Esophagus muscularis mucosa (tissue), 4 donors: ENCODE measurements at regions of chr3 and their contacts with region 1.

Region 1: DNA sequence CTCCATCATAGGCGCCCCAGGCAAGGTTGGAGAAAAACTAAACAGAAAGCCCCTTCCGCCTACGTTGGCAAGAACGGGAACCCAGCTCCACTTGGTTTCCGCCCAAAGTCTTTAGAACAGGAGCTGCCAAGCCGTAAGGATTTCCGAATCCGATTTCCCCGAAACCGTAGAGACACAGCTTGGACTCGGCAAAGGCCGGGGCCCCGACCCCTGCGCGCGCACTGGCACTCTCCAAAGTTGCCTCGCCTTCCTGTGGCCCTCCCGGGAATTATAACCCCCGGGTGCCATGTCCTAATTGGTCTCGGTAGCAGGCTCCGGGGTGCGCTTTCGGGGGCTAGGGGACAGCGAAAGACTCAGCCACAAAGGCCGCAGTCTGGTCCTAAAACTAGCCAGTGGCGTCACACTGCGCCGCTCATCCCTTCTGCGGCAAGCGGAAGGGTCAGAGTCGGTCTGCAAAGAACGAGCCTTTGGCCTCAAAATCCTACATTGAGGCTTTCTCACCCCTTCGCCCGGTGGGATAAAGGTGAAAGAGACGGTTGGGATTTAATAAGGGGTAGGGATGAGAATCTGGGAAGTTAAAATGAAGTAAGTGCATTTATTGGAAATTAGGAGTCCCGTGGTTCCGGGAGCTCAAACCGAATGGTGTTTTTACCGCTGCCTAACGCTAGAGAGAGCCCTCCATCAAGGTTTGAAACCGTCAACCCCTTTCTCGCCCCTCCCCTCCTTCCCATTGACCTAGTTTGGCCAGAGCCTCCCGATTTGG is 6.8 kb downstream of the BCL6 start:
- DNase-seq: peak; percentile 98
- H3K4me3 ChIP-seq: peak overlapping the region; percentile 69 to 81 (median 76)
- H3K27ac ChIP-seq: peak overlapping the region; percentile 94 to 99 (median 98)
- H3K4me1 ChIP-seq: peaks cover 22 to 90% (median 52%) of the 10 kb centered on the region in 4 donors
- H3K27me3 ChIP-seq: no peaks in the 10 kb centered on the region
- CTCF ChIP-seq: peak; percentile 68 to 85 (median 76)
- EP300 ChIP-seq: peak; percentile 24
- POLR2A ChIP-seq: peak; percentile 40

Region 2: DNA sequence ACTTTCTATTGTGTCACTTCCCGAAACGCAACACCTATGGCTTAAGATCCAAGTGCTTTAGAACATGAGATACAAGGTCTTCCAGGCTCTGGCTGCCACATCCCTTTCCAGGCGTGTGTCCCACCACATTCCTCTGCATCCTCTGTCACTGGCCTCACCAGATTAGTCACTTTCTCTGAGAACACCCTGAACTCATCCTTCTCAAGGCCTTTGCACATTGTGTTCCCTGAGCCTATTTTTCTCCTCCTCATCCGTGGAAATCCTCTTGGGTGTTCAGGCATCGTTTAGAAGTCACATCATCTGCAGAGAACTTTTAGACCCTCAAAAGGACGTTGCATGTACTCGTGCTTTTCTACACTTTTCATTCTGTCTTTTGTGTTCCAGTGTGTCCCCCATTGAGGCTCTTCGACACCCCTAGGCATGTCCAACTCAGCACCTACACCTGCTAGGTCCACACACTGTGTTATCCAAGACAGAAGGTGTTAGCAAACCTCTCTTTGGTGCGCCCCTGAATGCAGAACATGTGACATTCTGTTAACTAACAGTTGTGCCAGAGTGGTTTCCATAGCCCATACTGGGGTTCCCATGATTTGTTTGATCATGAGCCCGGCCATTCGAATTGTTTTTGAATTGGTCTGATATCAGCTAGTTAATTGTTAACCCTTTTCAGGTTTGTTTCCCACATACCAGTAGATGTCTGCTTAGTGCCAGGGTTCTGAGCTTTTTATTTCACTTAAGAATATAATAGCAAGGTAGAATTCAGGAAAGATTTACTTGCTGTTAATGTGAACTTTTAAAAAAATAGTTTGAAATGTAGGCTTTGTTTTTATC is 482.7 kb after region 1 on chr3:
- intact Hi-C with region 1: loop called (anchors 2 kb)
- DNase-seq: peak; percentile 96
- H3K4me3 ChIP-seq: peak overlapping the region; percentile 27 to 67 (median 52)
- H3K27ac ChIP-seq: peak overlapping the region; percentile 90 to 98 (median 94)
- H3K4me1 ChIP-seq: peaks cover 76 to 96% (median 89%) of the 10 kb centered on the region in 4 donors
- H3K27me3 ChIP-seq: no peaks in the 10 kb centered on the region
- CTCF ChIP-seq: no peak
- EP300 ChIP-seq: peak; percentile 100
- POLR2A ChIP-seq: no peak

Region 3: DNA sequence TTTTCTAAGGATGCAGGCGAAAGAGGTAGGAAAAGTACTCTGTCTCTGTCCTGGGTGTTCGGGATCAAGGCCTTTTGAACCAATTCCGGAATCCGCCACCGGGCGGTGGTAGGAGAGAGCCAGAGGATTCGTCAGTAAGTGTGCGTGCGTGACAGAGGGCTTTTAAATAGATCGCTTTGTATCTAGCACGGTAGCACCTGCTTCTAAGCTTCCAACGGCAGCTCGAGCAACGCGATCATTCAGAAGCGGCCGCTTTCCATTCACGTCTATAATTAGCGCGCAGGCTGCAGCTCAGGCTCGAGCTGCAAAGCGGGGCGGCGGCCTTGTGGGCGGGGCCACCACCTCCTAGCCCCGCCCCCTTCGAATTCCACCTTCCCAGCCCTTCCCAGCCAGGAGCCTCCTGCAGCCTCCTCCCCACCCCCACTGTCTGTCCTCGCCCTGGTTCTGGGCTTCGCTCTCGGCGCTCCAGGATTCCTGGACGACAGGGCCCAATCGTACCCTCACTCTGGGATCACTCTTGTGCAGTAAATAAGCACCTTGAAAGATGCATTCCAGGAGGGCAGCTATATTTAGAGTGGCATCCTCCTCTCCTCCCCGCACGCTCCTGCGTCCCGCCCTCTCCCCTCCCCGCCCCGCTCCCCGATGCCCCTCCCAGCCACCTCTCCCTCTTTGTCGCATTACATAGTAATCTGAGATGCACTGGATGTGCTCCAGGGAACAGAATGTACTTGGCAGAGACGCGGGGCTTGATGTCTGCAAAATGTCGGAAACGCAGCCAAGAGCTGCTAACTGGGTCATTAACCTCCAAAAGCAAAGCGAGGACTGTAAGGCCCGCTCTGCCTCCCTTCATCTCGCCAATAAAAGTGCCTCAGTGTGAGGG is 1209.1 kb after region 1 on chr3:
- intact Hi-C with region 1: loop called (anchors 2 kb)
- DNase-seq: peak; percentile 99
- H3K4me3 ChIP-seq: peak overlapping the region; percentile 46 to 52 (median 48)
- H3K27ac ChIP-seq: peak overlapping the region; percentile 95 to 99 (median 96)
- H3K4me1 ChIP-seq: peaks cover 55 to 81% (median 69%) of the 10 kb centered on the region in 4 donors
- H3K27me3 ChIP-seq: no peaks in the 10 kb centered on the region
- CTCF ChIP-seq: peak; percentile 30 to 52 (median 42)
- EP300 ChIP-seq: peak; percentile 100
- POLR2A ChIP-seq: no peak